Activated CD8-positive, alpha-beta T cell treated with anti-CD3 and anti-CD28 coated beads for 36 hours (primary cell): ENCODE measurements at regions of chr2 and their contacts with region 1.

Region 1: GRCh38 chr2:68516051-68516955 is 48.9 kb downstream of the APLF start:
- DNase-seq: peak; percentile 13
- ATAC-seq: peak; percentile 55
- H3K4me3 Mint-ChIP-seq: no peak overlapping the region
- H3K27ac Mint-ChIP-seq: no peak overlapping the region
- H3K4me1 Mint-ChIP-seq: peaks cover 6% of the 10 kb centered on the region
- H3K27me3 Mint-ChIP-seq: no peaks in the 10 kb centered on the region
- CTCF ChIP-seq: no peak

Region 2: GRCh38 chr2:68643011-68643873 is 126.9 kb after region 1 on chr2 and contains the start of gene PROKR1:
- CTCF ChIA-PET with region 1: no interaction called
- POLR2A ChIA-PET with region 1: no interaction called
- intact Hi-C with region 1: loop called (anchors 5 kb)
- DNase-seq: peak; percentile 18
- ATAC-seq: peak; percentile 38
- H3K4me3 Mint-ChIP-seq: peak within 1 kb of the TSS; percentile 22
- H3K27ac Mint-ChIP-seq: no peak within 1 kb of the TSS
- H3K4me1 Mint-ChIP-seq: peaks cover 10% of the 10 kb centered on the region
- H3K27me3 Mint-ChIP-seq: peaks cover 67% of the 10 kb centered on the region
- CTCF ChIP-seq: no peak
- total RNA-seq, gene PROKR1: not detected